Naive thymus-derived CD4-positive, alpha-beta T cell (primary cell): ENCODE measurements at regions of chr10 and their contacts with region 1.

Region 1: DNA sequence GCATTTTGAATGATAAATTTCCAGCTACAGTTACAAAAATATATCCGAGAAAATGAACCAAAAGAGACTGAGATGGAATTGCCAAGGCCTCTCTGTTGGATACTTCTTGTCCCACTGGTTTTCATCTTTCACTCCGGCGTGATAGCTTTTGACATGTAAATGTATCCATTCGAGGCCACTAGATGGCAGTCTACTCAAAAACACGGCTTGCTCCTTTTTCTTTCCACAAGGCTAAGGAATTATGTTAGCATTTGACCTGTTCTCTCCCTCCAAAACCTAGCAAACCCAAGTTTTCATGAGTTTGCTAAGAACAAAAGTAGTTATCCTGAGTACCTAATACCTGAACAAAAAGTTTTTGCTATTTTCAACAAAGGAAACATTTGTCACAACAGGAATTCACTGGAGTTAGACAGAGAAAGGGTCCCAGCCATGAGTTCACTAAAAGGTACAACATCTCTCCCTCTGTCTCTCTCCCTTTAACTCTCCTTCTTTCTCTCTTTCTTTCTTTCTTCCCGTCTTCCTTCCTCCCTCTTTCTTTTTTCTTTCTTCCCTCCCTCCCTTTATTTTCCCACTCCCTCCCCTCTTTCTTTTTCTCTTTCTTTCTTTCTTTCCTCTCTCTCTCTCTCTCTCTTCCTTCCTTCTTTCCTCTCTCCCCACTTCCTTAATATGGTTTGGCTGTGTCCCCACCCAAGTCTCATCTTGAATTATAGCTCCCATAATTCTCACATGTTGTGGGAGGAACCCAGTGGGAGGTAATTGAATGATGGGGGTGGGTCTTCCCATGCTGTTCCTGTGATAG is 207.9 kb upstream of the MYO3A start:
- DNase-seq: peak in 5 of 9 donors; percentile 13 to 31 (median 18)
- ATAC-seq: no peak
- H3K4me3 ChIP-seq: no peak overlapping the region
- H3K4me3 Mint-ChIP-seq: no peak overlapping the region
- H3K27ac ChIP-seq: no peak overlapping the region
- H3K27ac Mint-ChIP-seq: no peak overlapping the region
- H3K4me1 ChIP-seq: no peaks in the 10 kb centered on the region
- H3K4me1 Mint-ChIP-seq: peaks cover 0 to 3% (median 0%) of the 10 kb centered on the region in 7 donors
- H3K27me3 ChIP-seq: no peaks in the 10 kb centered on the region
- H3K27me3 Mint-ChIP-seq: peaks cover 0 to 34% (median 21%) of the 10 kb centered on the region in 5 donors

Region 2: DNA sequence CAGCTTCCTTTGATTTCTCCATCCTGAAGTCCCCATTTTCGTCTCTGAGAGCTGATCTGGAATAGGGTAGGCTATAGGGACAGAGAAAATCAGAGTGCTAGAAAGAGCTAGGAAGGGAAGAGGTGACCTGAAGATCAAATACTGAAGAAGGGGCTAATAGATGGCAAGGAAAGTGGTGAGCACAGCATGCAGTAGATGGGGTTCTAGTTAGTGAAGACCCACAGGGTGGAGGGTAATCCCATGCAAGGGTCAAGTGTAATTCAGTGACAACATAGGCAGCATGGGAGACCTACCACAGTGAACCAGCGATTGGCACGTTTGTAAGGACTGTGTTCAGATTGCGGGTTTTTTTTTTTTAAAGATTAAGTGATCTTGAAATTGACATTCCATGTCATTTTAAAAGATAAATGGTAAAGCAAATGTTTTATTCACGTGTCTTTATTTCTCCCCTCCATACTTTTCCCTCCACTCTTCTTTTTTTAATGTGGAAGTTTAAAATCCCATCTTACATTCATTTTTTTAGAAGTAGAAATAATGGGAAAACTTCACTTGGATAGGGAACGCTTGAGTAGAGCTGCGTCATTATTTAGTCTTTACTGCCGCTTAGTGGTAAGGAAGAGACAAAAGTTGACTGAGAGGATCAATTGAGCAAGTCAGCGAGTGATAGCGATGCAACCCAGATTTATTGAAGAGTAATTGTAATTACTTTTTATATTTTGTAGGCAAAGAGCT is 1155.6 kb after region 1 on chr10:
- CTCF ChIA-PET with region 1: no interaction called
- POLR2A ChIA-PET with region 1: no interaction called
- intact Hi-C with region 1: loop called in 1 of 2 experiments (anchors 5 kb)
- DNase-seq: peak in 6 of 9 donors; percentile 23 to 60 (median 37)
- ATAC-seq: peak; percentile 87
- H3K4me3 ChIP-seq: no peak overlapping the region
- H3K4me3 Mint-ChIP-seq: no peak overlapping the region
- H3K27ac ChIP-seq: no peak overlapping the region
- H3K27ac Mint-ChIP-seq: no peak overlapping the region
- H3K4me1 ChIP-seq: no peaks in the 10 kb centered on the region
- H3K4me1 Mint-ChIP-seq: peaks cover 0 to 8% (median 0%) of the 10 kb centered on the region in 7 donors
- H3K27me3 ChIP-seq: no peaks in the 10 kb centered on the region
- H3K27me3 Mint-ChIP-seq: peaks cover 4 to 37% (median 13%) of the 10 kb centered on the region in 5 donors